Common myeloid progenitor, CD34-positive (primary cell): ENCODE measurements at regions of chr17 and their contacts with region 1.

Region 1: DNA sequence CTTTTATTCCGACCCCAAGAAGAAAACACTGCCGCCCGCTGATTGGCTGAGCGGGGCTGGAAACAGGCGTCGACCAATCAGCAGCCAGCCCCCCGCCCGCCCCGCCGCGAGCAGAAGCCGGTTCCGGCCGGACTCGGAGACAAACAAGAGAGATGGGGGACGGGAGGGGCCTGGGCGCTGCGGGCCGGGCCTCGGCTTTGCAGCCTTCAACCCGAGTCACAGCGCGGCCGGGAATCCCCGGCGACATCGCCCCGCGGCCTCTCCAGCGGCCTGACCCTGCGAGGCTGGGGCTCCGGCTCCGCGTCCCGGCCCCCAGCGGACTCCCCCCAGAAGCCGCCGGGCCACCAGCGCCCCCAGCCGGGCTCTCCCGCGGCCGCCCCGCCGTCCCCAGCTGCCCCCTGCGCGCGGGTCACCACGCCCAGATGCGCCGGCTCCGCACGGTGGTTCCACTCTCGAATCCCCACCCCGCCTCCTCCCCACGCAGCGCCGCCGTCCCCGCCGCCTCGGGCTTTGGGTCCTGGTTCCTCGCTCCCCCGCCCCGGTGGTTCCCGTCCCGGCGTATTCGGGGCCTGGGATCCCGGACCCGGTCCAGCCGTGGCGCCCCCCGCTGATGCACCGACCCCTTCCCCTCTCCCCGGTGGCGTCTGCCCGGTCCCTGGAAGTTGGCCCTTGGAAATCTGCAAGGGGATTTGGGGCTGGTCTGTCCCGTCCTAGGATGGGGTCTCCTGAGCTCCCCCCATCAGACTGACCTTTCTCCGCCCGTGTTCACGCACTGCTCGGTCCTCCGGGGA is 417 bp upstream of the SLC43A2 start:
- DNase-seq: peak; percentile 94 to 96 (median 94)
- H3K4me3 ChIP-seq: peak overlapping the region; percentile 32 to 96 (median 80)
- H3K27ac ChIP-seq: peak overlapping the region in 1 of 2 experiments; percentile 68
- H3K4me1 ChIP-seq: peaks cover 3 to 59% (median 50%) of the 10 kb centered on the region in 4 experiments
- H3K27me3 ChIP-seq: no peaks in the 10 kb centered on the region

Region 2: GRCh38 chr17:1606352-1607033 is 22.6 kb before region 1 on chr17:
- CTCF ChIA-PET with region 1: interaction called, 15 read pairs
- POLR2A ChIA-PET with region 1: interaction called, 5 read pairs
- DNase-seq: no peak
- H3K4me3 ChIP-seq: no peak overlapping the region
- H3K27ac ChIP-seq: no peak overlapping the region
- H3K4me1 ChIP-seq: peaks cover 5 to 41% (median 25%) of the 10 kb centered on the region in 4 experiments
- H3K27me3 ChIP-seq: no peaks in the 10 kb centered on the region

Region 3: DNA sequence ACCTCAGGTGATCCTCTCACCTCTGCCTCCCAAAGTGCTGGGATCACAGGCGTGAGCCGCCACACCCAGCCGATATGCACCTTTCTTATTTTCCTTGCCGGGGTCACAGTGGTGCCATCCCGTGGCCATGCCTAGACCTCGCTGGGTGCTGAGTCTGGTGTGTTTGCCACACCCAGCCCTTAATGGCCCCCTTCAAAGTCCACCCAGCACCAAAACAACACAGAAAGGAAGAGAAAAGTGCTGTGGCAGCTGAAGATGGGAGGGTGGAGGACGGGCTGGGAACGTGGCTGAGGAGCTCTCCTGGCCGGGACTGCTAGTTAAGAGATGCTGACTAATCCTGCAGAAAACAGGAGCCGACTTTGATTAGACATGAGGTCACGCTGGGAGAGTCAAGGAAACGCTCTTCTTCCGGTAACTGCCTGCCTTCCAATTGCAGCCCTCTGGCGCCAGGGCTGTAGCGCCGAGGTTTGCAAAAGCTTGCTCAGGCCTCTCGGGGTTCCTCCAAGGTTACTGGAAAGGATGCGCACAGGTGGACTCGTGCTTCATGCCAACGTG is 11.4 kb before region 1 on chr17:
- CTCF ChIA-PET with region 1: interaction called, 24 read pairs
- POLR2A ChIA-PET with region 1: no interaction called
- DNase-seq: peak; percentile 42 to 62 (median 55)
- H3K4me3 ChIP-seq: peak overlapping the region in 1 of 7 experiments; percentile 33
- H3K27ac ChIP-seq: no peak overlapping the region
- H3K4me1 ChIP-seq: peaks cover 0 to 8% (median 6%) of the 10 kb centered on the region in 4 experiments
- H3K27me3 ChIP-seq: no peaks in the 10 kb centered on the region

Region 4: GRCh38 chr17:1648963-1649843 is 20.2 kb after region 1 on chr17:
- CTCF ChIA-PET with region 1: interaction called, 49 read pairs
- POLR2A ChIA-PET with region 1: interaction called, 5 read pairs
- DNase-seq: peak; percentile 96 to 98 (median 96)
- H3K4me3 ChIP-seq: peak overlapping the region; percentile 56 to 83 (median 68)
- H3K27ac ChIP-seq: peak overlapping the region; percentile 50 to 73
- H3K4me1 ChIP-seq: peaks cover 0 to 59% (median 56%) of the 10 kb centered on the region in 4 experiments
- H3K27me3 ChIP-seq: no peaks in the 10 kb centered on the region